ENCODE measurements at regions of chr3 and their contacts with region 1.

Region 1: DNA sequence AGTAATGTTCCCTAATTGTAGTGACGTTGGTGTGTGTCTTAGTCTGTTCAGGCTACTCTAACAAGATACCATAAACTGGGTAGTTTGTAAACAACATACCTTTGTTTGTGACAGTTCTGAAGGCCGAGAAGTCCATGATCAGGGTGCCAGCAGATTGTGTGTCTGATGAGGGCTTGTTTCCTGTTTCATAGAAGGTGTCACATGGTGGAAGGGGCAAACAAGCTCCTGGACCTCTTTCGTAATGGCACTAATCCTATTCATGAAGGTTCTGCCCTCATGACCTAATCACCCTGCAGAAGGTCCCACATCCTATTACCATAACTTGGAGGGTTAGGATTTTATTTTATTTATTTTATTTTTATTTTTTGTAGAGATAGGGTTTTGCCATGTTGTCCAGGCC is 11.1 kb downstream of the ATXN7 start:
- DNase-seq: no peak
- ATAC-seq: no peak
- H3K4me3 Mint-ChIP-seq: no peak overlapping the region
- H3K27ac Mint-ChIP-seq: no peak overlapping the region
- H3K4me1 Mint-ChIP-seq: peaks cover 64% of the 10 kb centered on the region
- H3K27me3 Mint-ChIP-seq: no peaks in the 10 kb centered on the region
- CTCF ChIP-seq: no peak

Region 2: DNA sequence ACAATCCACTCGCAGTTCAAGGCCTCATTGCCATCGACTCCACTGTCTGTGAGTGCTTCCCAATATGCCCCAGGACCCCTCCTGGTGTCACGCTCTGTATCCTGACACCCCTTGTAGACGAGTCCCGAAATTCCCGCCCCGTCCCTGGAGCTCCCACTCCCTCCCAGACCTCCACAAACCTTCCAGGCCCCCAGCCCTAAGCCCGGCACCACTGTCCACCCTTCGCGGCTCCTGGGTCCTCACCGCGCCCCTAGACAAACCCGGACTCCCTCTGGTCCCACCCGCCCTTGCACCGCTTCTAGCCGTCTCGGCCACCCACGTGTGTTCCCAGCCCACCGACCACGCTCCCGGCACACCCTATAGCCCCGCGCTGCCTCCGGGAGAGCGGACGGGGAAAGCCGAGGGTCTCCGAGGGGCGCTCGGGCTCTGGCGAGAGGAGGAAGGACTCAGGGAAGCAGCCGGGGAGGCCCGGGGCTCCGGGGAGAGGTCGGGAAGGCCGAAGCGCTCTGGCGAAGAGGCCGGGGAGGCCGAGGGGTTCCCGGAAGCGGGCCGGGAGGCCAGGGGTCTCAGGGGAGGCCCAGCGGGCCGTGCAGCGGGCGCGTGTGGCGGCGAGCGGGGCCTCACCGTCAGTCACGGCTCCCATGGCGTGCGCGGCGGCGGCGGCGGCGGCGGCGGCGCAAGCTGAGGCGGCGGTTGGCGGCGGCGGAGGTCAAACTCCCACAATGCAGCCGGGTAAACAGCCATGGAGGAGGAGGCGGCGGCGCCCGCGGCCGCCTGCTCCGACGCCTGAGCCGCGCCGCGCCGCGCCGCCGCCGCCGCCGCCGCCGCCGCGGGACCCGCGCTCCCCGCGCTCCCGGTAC is 11.4 kb before region 1 on chr3 and contains the starts of genes ATXN7 and THOC7:
- CTCF ChIA-PET with region 1: no interaction called
- POLR2A ChIA-PET with region 1: no interaction called
- intact Hi-C with region 1: no loop called
- DNase-seq: peak; percentile 77
- ATAC-seq: peak; percentile 80
- H3K4me3 Mint-ChIP-seq: peak within 1 kb of the TSS; percentile 96
- H3K27ac Mint-ChIP-seq: peak within 1 kb of the TSS; percentile 94
- H3K4me1 Mint-ChIP-seq: peaks cover 50% of the 10 kb centered on the region
- H3K27me3 Mint-ChIP-seq: no peaks in the 10 kb centered on the region
- CTCF ChIP-seq: no peak
- total RNA-seq, gene ATXN7: 45.2 and 46.7 TPM in 2 replicates
- total RNA-seq, gene THOC7: 50.2 and 53.8 TPM in 2 replicates

Region 3: GRCh38 chr3:63889431-63889830 is 14.7 kb after region 1 on chr3:
- CTCF ChIA-PET with region 1: interaction called, 3 read pairs
- POLR2A ChIA-PET with region 1: interaction called, 4 read pairs
- intact Hi-C with region 1: loop called (anchors 2 kb)
- DNase-seq: no peak
- ATAC-seq: no peak
- H3K4me3 Mint-ChIP-seq: no peak overlapping the region
- H3K27ac Mint-ChIP-seq: no peak overlapping the region
- H3K4me1 Mint-ChIP-seq: peaks cover 37% of the 10 kb centered on the region
- H3K27me3 Mint-ChIP-seq: no peaks in the 10 kb centered on the region
- CTCF ChIP-seq: no peak

Region 4: GRCh38 chr3:63896332-63897030 is 21.7 kb after region 1 on chr3:
- CTCF ChIA-PET with region 1: no interaction called
- POLR2A ChIA-PET with region 1: no interaction called
- intact Hi-C with region 1: loop called (anchors 2 kb)
- DNase-seq: no peak
- ATAC-seq: no peak
- H3K4me3 Mint-ChIP-seq: no peak overlapping the region
- H3K27ac Mint-ChIP-seq: no peak overlapping the region
- H3K4me1 Mint-ChIP-seq: peaks cover 48% of the 10 kb centered on the region
- H3K27me3 Mint-ChIP-seq: no peaks in the 10 kb centered on the region
- CTCF ChIP-seq: no peak

Region 5: GRCh38 chr3:64355401-64355807 is 480.6 kb after region 1 on chr3:
- CTCF ChIA-PET with region 1: no interaction called
- POLR2A ChIA-PET with region 1: no interaction called
- intact Hi-C with region 1: no loop called
- DNase-seq: no peak
- ATAC-seq: no peak
- H3K4me3 Mint-ChIP-seq: no peak overlapping the region
- H3K27ac Mint-ChIP-seq: no peak overlapping the region
- H3K4me1 Mint-ChIP-seq: no peaks in the 10 kb centered on the region
- H3K27me3 Mint-ChIP-seq: peaks cover 2% of the 10 kb centered on the region
- CTCF ChIP-seq: no peak